ENCODE measurements at regions of chr22 and their contacts with region 1.

Region 1: DNA sequence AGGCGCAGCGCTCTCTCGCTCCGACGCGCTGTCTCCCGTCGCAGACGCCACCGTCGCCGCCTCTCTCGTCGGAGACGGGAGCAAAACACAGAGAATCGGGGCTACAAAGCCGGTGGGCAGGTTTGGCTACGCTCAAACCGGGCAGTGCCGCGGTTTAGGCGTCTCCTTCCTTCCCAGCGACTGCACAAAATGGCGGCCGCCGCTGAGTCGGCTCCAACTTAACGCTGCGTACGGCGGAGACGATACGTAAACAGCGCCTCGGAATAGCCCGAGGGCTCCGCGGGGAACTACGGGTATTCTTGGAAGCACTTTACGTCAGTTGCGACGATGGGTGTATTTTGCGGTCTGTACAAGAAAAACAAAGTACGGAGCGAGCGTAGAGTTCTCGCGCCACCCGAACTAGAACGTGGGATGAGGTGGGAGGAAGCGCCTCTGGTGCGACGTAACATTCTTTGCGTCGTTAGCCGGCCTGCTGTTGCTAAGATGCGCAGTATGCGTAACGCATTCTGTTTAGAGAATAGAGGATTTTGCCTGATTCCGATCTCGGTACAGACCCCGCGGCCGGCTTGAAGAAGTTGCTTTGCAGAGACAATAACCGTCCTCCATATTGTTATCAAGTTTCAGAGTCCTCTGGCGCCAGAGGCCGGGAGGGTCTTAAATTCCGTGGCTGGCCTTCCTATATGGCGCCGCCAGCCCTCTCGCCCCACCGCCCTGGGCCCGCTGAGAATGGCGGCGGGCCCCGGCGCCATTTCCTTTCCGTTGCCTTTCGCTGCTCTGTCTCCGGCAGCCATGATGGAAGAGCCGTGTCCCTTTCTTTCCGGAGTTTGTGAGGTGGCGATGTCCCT is at the start of gene DDX17:
- DNase-seq: peak; percentile 95
- H3K4me3 ChIP-seq: peak within 1 kb of the TSS; percentile 67 to 90 (median 82)
- H3K27ac ChIP-seq: peak within 1 kb of the TSS; percentile 97 to 100 (median 98)
- H3K4me1 ChIP-seq: peaks cover 15 to 39% (median 28%) of the 10 kb centered on the region in 4 donors
- H3K27me3 ChIP-seq: no peaks in the 10 kb centered on the region
- CTCF ChIP-seq: peak in 3 of 5 experiments; percentile 24 to 64 (median 55)
- EP300 ChIP-seq: no peak
- POLR2A ChIP-seq: peak; percentile 82
- total RNA-seq, gene DDX17: 506 to 1,034 (median 728) TPM

Region 2: GRCh38 chr22:38569972-38570778 is 63.8 kb after region 1 on chr22 and contains the start of gene DMC1:
- in situ Hi-C with region 1: no loop called
- intact Hi-C with region 1: loop called (anchors 2 kb)
- DNase-seq: peak; percentile 96
- H3K4me3 ChIP-seq: peak within 1 kb of the TSS; percentile 40 to 66 (median 56)
- H3K27ac ChIP-seq: peak within 1 kb of the TSS; percentile 77 to 81 (median 78)
- H3K4me1 ChIP-seq: peaks cover 3 to 20% (median 9%) of the 10 kb centered on the region in 4 donors
- H3K27me3 ChIP-seq: no peaks in the 10 kb centered on the region
- CTCF ChIP-seq: peak in 1 of 5 experiments; percentile 2
- EP300 ChIP-seq: no peak
- POLR2A ChIP-seq: peak; percentile 39
- total RNA-seq, gene DMC1: 0.32 to 86.2 (median 0.68) TPM in 3 of 4 donors, not detected in the other